H1 (cell line): ENCODE measurements at regions of chr4 and their contacts with region 1.

Region 1: GRCh38 chr4:60805500-60806313 is 394.4 kb upstream of the ADGRL3 start:
- DNase-seq: no peak
- H3K4me3 ChIP-seq: no peak overlapping the region
- H3K27ac ChIP-seq: no peak overlapping the region
- H3K4me1 ChIP-seq: no peaks in the 10 kb centered on the region
- H3K27me3 ChIP-seq: no peaks in the 10 kb centered on the region
- CTCF ChIP-seq: peak in 2 of 3 experiments; percentile 50 to 81; a peak in 2 of 4 replicates
- EP300 ChIP-seq: no peak
- POLR2A ChIP-seq: no peak
- RAD21 ChIP-seq: peak; percentile 65 to 77

Region 2: DNA sequence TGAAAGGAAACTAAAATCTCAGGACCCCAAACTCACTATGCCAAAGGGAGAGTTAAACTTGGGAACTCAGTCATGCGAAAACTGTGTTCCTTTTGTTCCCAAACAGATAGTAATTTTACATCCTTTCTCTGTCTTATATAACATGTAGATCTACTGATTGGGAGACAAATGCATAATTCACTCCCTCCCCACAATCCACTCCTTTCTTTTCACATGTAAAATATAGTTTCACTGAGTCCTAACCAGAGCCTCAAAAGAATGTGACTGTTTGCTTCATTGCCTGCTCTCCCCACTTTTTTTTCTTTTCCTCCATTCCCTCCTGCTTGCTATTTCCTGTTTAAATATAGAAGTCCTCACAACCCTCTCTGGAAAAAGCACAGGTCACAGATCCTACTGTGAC is 304.9 kb before region 1 on chr4:
- CTCF ChIA-PET with region 1: no interaction called
- POLR2A ChIA-PET with region 1: no interaction called
- DNase-seq: no peak
- H3K4me3 ChIP-seq: no peak overlapping the region
- H3K27ac ChIP-seq: no peak overlapping the region
- H3K4me1 ChIP-seq: peaks cover 0 to 2% (median 0%) of the 10 kb centered on the region in 4 experiments; a peak in 3 of 7 replicates
- H3K27me3 ChIP-seq: no peaks in the 10 kb centered on the region
- CTCF ChIP-seq: no peak
- EP300 ChIP-seq: no peak
- POLR2A ChIP-seq: no peak
- RAD21 ChIP-seq: no peak

Region 3: GRCh38 chr4:60790608-60791007 is 15.1 kb before region 1 on chr4:
- CTCF ChIA-PET with region 1: interaction called, 15 read pairs
- POLR2A ChIA-PET with region 1: no interaction called
- DNase-seq: no peak
- H3K4me3 ChIP-seq: no peak overlapping the region
- H3K27ac ChIP-seq: no peak overlapping the region
- H3K4me1 ChIP-seq: peaks cover 0 to 5% (median under 1%) of the 10 kb centered on the region in 4 experiments; a peak in 1 of 7 replicates
- H3K27me3 ChIP-seq: no peaks in the 10 kb centered on the region
- CTCF ChIP-seq: no peak
- EP300 ChIP-seq: no peak
- POLR2A ChIP-seq: no peak
- RAD21 ChIP-seq: no peak

Region 4: GRCh38 chr4:60817609-60818008 is 11.9 kb after region 1 on chr4:
- CTCF ChIA-PET with region 1: interaction called, 22 read pairs
- POLR2A ChIA-PET with region 1: no interaction called
- DNase-seq: no peak
- H3K4me3 ChIP-seq: no peak overlapping the region
- H3K27ac ChIP-seq: no peak overlapping the region
- H3K4me1 ChIP-seq: no peaks in the 10 kb centered on the region
- H3K27me3 ChIP-seq: no peaks in the 10 kb centered on the region
- CTCF ChIP-seq: no peak
- EP300 ChIP-seq: no peak
- POLR2A ChIP-seq: no peak
- RAD21 ChIP-seq: no peak

Region 5: GRCh38 chr4:60822986-60823385 is 17.3 kb after region 1 on chr4:
- CTCF ChIA-PET with region 1: interaction called, 22 read pairs
- POLR2A ChIA-PET with region 1: no interaction called
- DNase-seq: no peak
- H3K4me3 ChIP-seq: no peak overlapping the region
- H3K27ac ChIP-seq: no peak overlapping the region
- H3K4me1 ChIP-seq: no peaks in the 10 kb centered on the region
- H3K27me3 ChIP-seq: no peaks in the 10 kb centered on the region
- CTCF ChIP-seq: no peak
- EP300 ChIP-seq: no peak
- POLR2A ChIP-seq: no peak
- RAD21 ChIP-seq: no peak